ENCODE measurements at regions of chr19 and their contacts with region 1.

Region 1: GRCh38 chr19:12722566-12723380 is 959 bp downstream of the TNPO2 start:
- DNase-seq: peak; percentile 98
- H3K4me3 Mint-ChIP-seq: peak overlapping the region; percentile 86
- H3K27ac Mint-ChIP-seq: peak overlapping the region; percentile 93
- H3K4me1 Mint-ChIP-seq: peaks cover 37% of the 10 kb centered on the region
- H3K27me3 Mint-ChIP-seq: no peaks in the 10 kb centered on the region

Region 2: DNA sequence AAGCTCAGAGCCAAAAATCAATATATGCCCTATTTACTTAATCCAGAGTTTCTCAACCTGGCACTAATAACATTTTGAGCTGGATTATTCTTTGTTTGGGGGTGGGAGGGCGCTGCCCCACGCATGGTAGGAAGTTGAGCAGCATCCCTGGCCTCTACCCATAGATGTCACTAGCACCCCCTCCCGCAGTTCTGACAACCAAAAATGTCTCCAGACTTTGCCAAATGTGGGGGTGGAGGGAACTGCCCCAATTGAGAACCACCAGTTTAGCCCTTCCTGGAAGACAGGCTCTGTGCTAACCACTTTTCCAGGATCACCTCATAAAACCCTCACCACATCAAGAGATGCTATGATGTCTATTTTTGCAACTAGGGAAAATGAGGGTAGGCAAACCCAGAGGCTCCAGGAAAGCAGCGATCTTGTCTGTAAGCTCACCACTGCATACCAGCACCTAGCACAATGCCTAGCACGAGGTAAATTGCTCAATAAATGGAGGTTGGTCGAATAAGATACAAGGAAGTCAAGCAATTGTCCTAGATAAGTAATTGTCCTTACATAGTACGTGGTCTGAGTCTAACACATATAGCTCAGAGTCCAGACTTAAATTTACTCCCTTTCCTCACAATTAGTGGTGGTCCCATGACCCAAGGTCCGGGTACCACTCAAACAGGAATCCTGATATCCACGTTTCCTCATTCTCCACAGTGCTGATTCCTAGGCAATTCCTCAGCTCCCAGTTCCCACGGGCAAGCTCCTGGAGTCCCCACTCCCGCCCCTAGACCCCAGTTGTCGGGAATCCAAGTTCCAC is 10.8 kb after region 1 on chr19:
- CTCF ChIA-PET with region 1: interaction called, 22 read pairs
- POLR2A ChIA-PET with region 1: interaction called, 8 read pairs
- DNase-seq: peak; percentile 72
- H3K4me3 Mint-ChIP-seq: peak overlapping the region; percentile 89
- H3K27ac Mint-ChIP-seq: peak overlapping the region; percentile 97
- H3K4me1 Mint-ChIP-seq: peaks cover 45% of the 10 kb centered on the region
- H3K27me3 Mint-ChIP-seq: no peaks in the 10 kb centered on the region

Measured in activated CD4-positive, alpha-beta T cell treated with anti-CD3 and anti-CD28 coated beads, Interleukin-2, amount 10 ng/mL, durations not matched to agents 7 days and 5 days (primary cell).